ENCODE measurements at regions of chr3 and their contacts with region 1.

Region 1: DNA sequence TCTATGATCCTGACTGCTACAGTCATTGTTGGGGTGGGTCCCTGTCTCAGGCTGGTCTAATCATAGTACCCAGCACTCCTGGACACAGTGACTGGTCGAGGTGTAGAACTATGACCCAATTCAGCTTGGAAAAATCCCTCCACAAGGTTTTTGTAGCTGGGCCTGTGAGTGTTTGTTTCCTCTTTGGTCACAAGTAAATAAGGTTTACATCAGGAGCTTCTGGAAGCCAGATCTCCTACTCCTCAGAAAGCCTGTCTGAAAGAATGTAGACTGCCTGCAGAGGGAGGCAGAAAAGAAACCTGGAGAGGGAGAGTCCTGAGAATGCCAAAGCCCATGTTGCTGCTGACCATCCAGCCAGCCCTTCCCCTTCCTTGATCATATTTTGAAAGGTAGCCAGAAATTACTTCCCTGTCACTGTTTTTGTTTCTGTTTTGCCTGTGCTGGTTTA is 123.2 kb downstream of the RAP2B start:
- DNase-seq: no peak
- H3K4me3 ChIP-seq: no peak overlapping the region
- H3K27ac ChIP-seq: peak overlapping the region; percentile 17
- H3K4me1 ChIP-seq: no peaks in the 10 kb centered on the region
- H3K27me3 ChIP-seq: no peaks in the 10 kb centered on the region
- CTCF ChIP-seq: no peak

Region 2: GRCh38 chr3:153052096-153052460 is 233.1 kb before region 1 on chr3:
- intact Hi-C with region 1: loop called (anchors 5 kb)
- DNase-seq: peak; percentile 54
- H3K4me3 ChIP-seq: no peak overlapping the region
- H3K27ac ChIP-seq: peak overlapping the region; percentile 45
- H3K4me1 ChIP-seq: no peaks in the 10 kb centered on the region
- H3K27me3 ChIP-seq: no peaks in the 10 kb centered on the region
- CTCF ChIP-seq: no peak

Measured in colonic mucosa (tissue), 4 donors.